Gastrocnemius medialis (tissue), 4 donors: ENCODE measurements at regions of chr6 and their contacts with region 1.

Region 1: GRCh38 chr6:104771258-104771832 is 88.4 kb downstream of the HACE1 start:
- DNase-seq: no peak
- ATAC-seq: no peak
- H3K4me3 ChIP-seq: no peak overlapping the region
- H3K27ac ChIP-seq: no peak overlapping the region
- H3K4me1 ChIP-seq: no peaks in the 10 kb centered on the region
- H3K27me3 ChIP-seq: no peaks in the 10 kb centered on the region
- CTCF ChIP-seq: peak in 3 of 5 experiments; percentile 2 to 54 (median 38)
- POLR2A ChIP-seq: no peak

Region 2: DNA sequence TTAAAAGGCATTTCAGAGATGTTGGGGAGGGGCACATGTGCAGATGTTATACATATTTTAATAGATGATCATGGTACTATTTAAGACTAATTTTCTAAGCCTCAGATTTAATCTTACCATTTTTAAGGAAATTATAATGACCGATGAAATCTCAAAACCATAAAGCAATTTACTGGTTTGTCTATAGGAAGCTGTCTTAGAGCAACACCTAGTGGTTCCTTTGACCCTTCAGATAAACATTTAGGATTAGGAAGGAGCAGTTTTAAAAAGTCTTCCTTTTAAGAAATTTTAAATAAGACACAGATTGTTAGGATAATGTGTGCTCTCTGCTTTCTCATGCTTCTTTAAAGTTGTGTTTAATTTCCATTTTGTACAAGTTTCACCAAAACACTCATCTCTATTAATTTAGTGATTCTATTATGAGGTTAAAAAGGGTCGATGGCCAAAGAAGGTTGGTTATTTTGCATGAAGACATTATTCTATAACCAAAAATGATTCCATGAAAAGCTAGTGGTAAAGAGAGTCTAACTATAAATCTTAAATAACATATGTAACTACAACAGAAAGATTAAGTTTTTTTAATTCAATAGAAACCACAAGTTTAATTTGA is 288.0 kb before region 1 on chr6:
- in situ Hi-C with region 1: no loop called
- intact Hi-C with region 1: no loop called
- DNase-seq: no peak
- ATAC-seq: no peak
- H3K4me3 ChIP-seq: no peak overlapping the region
- H3K27ac ChIP-seq: no peak overlapping the region
- H3K4me1 ChIP-seq: no peaks in the 10 kb centered on the region
- H3K27me3 ChIP-seq: no peaks in the 10 kb centered on the region
- CTCF ChIP-seq: no peak
- POLR2A ChIP-seq: no peak

Region 3: GRCh38 chr6:104682722-104683643 is 88.4 kb before region 1 on chr6:
- in situ Hi-C with region 1: no loop called
- intact Hi-C with region 1: loop called (anchors 2 kb)
- DNase-seq: no peak
- ATAC-seq: no peak
- H3K4me3 ChIP-seq: no peak overlapping the region
- H3K27ac ChIP-seq: no peak overlapping the region
- H3K4me1 ChIP-seq: no peaks in the 10 kb centered on the region
- H3K27me3 ChIP-seq: no peaks in the 10 kb centered on the region
- CTCF ChIP-seq: peak; percentile 30 to 68 (median 46)
- POLR2A ChIP-seq: no peak